Keratinocyte (primary cell): ENCODE measurements at regions of chr20 and their contacts with region 1.

Region 1: DNA sequence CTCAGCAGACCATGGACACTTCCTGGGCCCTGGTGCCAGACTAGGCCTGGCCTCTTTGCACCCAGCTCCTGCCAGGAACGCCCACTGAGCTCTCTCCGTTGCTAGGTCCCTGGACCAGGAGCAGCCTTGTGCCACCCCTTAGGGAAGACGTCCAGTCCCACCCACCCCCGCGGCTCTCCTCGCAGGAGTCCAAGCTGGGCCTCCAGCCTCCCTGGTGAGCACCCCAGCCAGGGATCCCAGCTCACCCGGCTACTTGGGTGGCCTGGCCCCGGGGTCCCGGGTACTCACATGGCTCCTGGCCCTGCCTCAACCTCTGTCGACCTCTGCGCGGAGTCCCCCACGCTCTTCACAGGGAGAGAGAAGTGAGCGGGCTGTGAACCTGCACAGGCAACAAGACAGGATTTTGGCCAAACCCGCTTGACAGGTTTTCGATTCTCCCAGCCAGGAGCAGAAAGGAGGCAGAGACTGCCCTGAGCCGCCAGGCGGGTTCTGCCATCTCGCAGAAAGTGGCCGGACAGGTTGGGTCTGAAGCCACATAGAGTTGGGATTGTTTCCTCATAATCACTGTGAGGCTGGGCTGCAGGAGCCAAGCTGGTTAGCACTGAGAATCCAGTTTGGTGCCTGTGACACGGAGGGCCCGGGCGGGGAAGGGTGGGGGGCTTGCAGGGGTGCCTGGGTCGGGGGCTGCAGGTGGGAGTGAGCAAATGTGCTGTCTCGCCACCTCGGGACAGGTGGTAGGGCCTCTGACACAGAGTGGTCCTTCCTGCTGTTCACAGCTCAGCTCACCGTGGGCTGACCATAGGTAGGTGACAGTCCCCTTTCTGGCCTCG is at the start of gene RBBP8NL:
- DNase-seq: peak; percentile 36
- H3K4me3 ChIP-seq: no peak within 1 kb of the TSS
- H3K27ac ChIP-seq: no peak within 1 kb of the TSS
- H3K4me1 ChIP-seq: peaks cover 12% of the 10 kb centered on the region
- H3K27me3 ChIP-seq: peaks cover 27% of the 10 kb centered on the region
- CTCF ChIP-seq: peak; percentile 49 to 73 (median 53)
- polyA plus RNA-seq, gene RBBP8NL: 0.05 to 0.26 TPM (median 0.13 TPM) in 3 replicates

Region 2: GRCh38 chr20:62536871-62537401 is 109.5 kb after region 1 on chr20:
- dilution Hi-C with region 1: loop called (anchors 25 kb)
- DNase-seq: no peak
- H3K4me3 ChIP-seq: no peak overlapping the region
- H3K27ac ChIP-seq: no peak overlapping the region
- H3K4me1 ChIP-seq: no peaks in the 10 kb centered on the region
- H3K27me3 ChIP-seq: peaks cover 61% of the 10 kb centered on the region
- CTCF ChIP-seq: no peak

Region 3: DNA sequence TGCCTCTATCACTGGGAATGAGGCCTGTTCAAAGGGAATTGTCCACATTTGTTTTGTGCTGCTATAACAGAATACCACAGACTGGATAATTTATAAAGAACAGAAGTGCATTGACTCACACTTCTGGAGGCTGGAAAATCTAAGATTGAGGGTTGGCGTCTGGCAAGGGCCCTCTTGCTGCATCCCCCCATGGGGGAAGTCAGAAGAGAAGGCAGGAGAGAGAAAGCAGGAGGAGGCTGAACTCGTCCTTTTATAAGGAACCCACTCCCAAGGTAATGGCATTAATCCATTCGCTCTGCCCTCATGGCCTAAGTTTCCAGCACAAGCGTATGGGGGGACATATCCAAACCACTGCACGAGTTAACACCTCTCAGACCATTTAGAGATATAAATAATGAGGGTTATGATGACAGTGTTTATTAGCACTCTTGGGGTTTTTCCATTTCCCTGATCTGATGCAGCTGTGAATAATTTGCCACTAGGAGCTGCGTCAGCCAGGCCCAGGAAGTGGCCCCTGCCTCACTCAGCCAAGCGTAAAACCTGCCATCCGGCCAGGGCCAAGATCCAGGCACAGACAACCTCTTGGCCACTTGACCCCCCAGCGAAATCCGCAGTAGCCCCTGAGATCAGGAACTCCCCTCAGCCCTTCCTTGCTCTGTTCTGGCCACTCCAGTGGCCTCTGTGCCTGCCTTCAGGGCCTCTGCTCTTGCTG is 200.7 kb after region 1 on chr20:
- dilution Hi-C with region 1: no loop called
- DNase-seq: no peak
- H3K4me3 ChIP-seq: peak overlapping the region in 1 of 3 experiments; percentile 16
- H3K27ac ChIP-seq: peak overlapping the region; percentile 56
- H3K4me1 ChIP-seq: peaks cover 27% of the 10 kb centered on the region
- H3K27me3 ChIP-seq: peaks cover 10% of the 10 kb centered on the region
- CTCF ChIP-seq: no peak